AG04450 (cell line): ENCODE measurements at regions of chr18 and their contacts with region 1.

Region 1: DNA sequence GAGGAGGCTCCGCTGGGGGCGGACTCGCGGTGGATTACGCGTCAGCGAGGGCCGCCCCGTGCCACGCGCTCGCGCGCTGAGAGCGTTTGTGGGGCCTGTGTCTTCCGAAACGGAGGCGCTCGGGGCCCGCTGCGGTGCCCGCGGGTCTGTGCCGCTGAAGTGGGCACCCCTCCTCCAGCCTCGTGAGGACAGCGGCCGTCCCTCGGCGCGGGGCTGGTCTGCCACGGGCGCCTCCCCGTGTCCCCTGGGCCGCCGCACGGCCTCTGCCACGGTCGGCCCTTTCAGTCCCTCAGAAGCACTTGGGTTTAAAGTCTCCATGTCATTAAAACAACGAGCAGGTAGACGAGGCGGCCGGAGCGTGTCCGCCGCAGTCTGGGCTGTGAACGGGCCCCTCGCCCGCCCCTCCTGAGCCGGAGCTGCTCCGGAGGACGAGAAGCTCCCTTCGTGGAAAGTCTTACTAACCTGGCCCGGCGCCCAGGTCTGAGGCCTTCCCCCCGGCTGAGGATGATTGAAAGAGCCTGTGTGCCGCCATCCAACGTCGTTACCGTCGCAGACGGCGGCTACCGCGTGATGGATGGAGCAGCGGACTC is 97.6 kb downstream of the NFATC1 start:
- DNase-seq: no peak
- H3K4me3 ChIP-seq: no peak overlapping the region
- H3K27ac ChIP-seq: no peak overlapping the region
- H3K27me3 ChIP-seq: peaks cover 2% of the 10 kb centered on the region
- CTCF ChIP-seq: no peak

Region 2: GRCh38 chr18:79258447-79258846 is 234.9 kb before region 1 on chr18:
- CTCF ChIA-PET with region 1: no interaction called
- POLR2A ChIA-PET with region 1: no interaction called
- DNase-seq: no peak
- H3K4me3 ChIP-seq: no peak overlapping the region
- H3K27ac ChIP-seq: no peak overlapping the region
- H3K27me3 ChIP-seq: no peaks in the 10 kb centered on the region
- CTCF ChIP-seq: no peak

Region 3: DNA sequence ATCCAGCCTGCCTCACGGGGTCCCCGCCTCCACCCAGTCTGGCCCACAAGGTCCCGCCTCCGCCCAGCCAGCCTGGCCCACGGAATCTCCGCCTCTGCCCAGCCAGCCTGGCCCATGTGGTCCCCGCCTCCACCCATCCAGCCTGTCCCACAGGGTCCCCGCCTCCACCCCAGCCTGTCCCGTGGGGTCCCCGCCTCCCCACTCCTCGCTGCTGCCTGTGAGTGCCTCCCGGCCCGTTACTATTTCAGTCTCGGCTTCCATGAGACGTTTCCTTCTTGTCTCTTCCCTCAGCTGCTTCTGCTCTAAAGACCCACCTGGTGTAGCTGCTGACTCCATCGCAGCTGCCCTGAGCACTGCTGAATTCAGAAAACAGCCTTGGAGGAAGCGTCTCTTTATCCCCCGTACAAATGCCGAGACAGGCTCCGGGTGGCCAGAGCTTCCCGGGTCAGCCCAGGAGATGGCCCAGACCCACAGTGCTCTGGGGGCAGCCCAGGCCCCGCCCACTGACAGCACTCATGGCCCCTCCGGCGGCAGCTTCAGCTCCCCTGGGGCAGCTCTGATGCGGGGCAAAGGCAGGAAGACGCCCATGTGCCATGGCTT is 27.8 kb before region 1 on chr18:
- CTCF ChIA-PET with region 1: no interaction called
- POLR2A ChIA-PET with region 1: no interaction called
- DNase-seq: no peak
- H3K4me3 ChIP-seq: no peak overlapping the region
- H3K27ac ChIP-seq: no peak overlapping the region
- H3K27me3 ChIP-seq: no peaks in the 10 kb centered on the region
- CTCF ChIP-seq: no peak

Region 4: DNA sequence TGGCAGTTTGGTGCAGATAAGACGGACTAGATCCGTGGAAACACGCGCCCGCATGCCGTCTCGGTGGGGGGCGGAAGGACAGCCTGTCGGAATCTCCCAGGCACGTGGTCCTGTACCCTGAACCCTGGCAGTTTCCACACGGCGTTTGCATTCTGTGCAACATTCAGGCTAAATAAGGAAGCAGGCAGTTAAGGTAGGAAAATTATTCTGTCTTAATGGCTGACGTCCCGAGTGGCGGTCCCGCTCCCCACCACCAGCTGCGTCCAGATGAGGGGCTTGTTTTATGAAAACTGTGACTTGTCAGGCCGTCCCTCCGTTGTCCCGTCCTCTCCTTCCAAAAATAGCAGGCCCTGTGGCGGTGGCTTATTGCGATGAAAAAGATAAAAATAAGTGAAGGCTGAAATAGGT is 22.6 kb after region 1 on chr18:
- CTCF ChIA-PET with region 1: interaction called, 10 read pairs
- POLR2A ChIA-PET with region 1: no interaction called
- DNase-seq: no peak
- H3K4me3 ChIP-seq: no peak overlapping the region
- H3K27ac ChIP-seq: no peak overlapping the region
- H3K27me3 ChIP-seq: peaks cover 23% of the 10 kb centered on the region
- CTCF ChIP-seq: no peak

Region 5: GRCh38 chr18:79588636-79589481 is 95.6 kb after region 1 on chr18:
- CTCF ChIA-PET with region 1: no interaction called
- POLR2A ChIA-PET with region 1: no interaction called
- DNase-seq: peak; percentile 55
- H3K4me3 ChIP-seq: no peak overlapping the region
- H3K27ac ChIP-seq: peak overlapping the region; percentile 39
- H3K27me3 ChIP-seq: peaks cover 32% of the 10 kb centered on the region
- CTCF ChIP-seq: no peak